ENCODE measurements at regions of chr13 and their contacts with region 1.

Region 1: DNA sequence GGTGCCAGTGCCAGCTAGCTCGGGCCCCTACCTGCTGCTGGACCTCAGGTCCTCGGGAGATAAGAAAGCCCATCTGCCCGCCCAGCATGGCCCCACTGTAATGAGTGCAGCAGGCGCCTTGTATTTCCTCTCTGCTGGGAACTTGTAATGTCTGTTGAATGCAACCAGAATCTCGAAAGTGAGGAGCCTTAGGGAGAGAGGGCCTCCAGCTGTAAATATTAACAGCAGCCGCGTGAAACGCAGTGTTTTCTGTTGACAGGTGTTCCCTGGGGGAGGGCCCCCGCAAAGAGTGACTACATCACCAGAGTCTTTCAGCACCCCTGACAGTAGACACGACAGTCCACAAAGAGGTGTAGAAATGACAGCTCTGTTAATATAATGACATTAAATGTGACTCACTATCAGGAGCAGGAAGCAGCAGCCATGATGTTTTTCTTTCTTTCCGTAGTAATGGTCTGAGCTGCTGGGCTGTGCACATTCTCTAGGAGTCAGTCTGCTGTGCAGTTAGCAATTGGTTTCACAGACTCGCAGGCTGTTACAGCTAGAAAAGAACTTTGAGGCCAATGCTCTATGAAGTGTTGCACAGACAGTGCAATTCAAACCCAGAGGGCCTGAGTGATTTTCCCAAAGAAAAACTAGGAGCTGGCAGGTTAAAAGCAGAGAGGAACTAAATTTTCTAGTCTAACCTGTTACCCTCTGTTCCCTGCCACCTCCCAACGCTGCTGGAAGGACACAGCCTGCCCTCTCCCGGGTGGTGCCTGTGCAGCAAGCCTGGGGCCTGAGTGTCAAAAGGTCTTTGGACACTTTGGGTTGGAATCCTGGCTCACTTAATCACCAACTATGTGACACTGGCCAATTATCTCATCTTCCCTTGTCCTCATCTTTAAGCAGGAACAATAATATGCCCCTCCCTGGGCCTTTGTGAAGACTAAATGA is 58.6 kb upstream of the WASF3 start:
- DNase-seq: no peak
- H3K4me3 Mint-ChIP-seq: no peak overlapping the region
- H3K27ac Mint-ChIP-seq: no peak overlapping the region
- H3K4me1 Mint-ChIP-seq: no peaks in the 10 kb centered on the region
- H3K27me3 Mint-ChIP-seq: peaks cover 3% of the 10 kb centered on the region

Region 2: DNA sequence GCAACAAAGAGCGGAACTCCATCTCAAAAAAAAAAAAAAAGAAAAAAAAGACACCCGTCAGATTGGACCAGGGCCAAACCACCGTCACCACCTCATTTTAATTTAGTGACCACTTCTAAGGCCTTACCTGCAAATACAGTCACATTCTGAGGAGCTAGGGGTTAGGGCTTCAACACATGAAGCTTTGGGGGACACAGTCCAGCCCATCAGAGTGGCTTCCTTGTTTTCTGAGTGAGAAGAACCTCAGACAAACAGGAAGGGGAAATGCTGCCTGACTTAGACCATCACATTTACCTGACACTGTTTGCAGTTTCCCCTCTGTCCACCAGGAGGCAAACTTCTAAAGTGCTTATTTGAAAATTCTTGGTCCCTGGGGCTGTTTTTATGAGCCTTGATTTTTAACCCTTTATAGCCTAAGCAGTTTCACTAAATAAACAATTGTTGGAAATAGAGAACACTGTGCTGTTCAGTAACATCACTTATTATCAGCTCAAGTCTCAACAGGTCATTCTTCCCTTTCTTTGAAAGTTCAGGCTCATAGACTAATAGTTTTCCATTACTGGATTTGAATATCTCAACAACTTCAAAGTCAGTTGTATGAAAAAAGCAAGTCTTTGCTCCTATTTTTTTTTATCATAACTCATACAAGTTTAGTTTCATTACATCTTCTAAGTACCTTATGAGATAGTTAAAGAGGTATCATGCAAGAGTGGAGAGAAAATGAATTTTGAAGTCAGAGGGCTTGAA is 16.3 kb before region 1 on chr13:
- CTCF ChIA-PET with region 1: interaction called, 15 read pairs
- POLR2A ChIA-PET with region 1: no interaction called
- DNase-seq: peak; percentile 71
- H3K4me3 Mint-ChIP-seq: no peak overlapping the region
- H3K27ac Mint-ChIP-seq: no peak overlapping the region
- H3K4me1 Mint-ChIP-seq: peaks cover 8% of the 10 kb centered on the region
- H3K27me3 Mint-ChIP-seq: no peaks in the 10 kb centered on the region

Measured in activated CD4-positive, alpha-beta memory T cell treated with anti-CD3 and anti-CD28 coated beads, Interleukin-2, amount 10 ng/mL, durations not matched to agents 7 days and 5 days (primary cell).